ENCODE measurements at regions of chrX and their contacts with region 1.

Region 1: GRCh38 chrX:119004920-119005524 is 30.6 kb downstream of the LONRF3 start:
- DNase-seq: peak in 1 of 2 donors; percentile 75
- H3K4me3 ChIP-seq: no peak overlapping the region
- H3K27ac ChIP-seq: no peak overlapping the region
- H3K4me1 ChIP-seq: no peaks in the 10 kb centered on the region
- H3K27me3 ChIP-seq: no peaks in the 10 kb centered on the region
- CTCF ChIP-seq: peak; percentile 38 to 93 (median 89)

Region 2: DNA sequence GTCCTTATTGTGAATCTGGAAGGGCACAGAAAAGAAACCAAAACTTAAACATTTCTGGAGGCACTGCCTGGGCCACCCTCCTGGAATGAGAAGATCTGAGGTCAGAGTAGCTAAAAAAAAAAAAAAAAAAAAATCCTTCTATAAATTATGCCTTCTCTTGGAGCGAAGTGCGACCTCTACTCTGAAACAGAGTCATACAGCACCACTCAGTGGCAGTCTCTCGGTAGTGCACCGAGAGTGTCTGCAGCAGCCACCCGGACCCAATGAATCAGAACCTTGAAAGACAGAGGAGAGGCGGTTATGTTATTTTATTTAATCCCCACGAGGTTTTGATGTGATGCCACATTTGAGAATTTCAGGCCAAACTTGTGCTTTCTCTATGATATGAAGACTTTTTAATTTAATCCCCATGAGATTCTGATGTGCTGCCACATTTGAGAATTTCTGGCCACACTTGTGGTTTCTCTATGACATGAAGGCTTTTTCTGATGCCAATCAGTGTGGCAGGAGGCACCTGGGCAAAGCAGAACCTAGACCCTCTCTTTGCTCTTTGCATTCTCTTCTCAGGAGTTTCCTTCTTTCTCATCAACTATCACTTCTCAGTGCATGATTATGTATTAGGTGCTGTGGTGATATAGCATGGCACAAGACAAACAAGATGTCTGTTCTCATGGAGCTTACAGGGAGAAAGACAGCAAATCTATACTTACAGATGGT is 62.2 kb after region 1 on chrX:
- intact Hi-C with region 1: loop called (anchors 5 kb)
- DNase-seq: peak in 1 of 2 donors; percentile 69
- H3K4me3 ChIP-seq: no peak overlapping the region
- H3K27ac ChIP-seq: no peak overlapping the region
- H3K4me1 ChIP-seq: no peaks in the 10 kb centered on the region
- H3K27me3 ChIP-seq: no peaks in the 10 kb centered on the region
- CTCF ChIP-seq: peak; percentile 15 to 58 (median 40)